AG04450 (cell line): ENCODE measurements at regions of chr12 and their contacts with region 1.

Region 1: DNA sequence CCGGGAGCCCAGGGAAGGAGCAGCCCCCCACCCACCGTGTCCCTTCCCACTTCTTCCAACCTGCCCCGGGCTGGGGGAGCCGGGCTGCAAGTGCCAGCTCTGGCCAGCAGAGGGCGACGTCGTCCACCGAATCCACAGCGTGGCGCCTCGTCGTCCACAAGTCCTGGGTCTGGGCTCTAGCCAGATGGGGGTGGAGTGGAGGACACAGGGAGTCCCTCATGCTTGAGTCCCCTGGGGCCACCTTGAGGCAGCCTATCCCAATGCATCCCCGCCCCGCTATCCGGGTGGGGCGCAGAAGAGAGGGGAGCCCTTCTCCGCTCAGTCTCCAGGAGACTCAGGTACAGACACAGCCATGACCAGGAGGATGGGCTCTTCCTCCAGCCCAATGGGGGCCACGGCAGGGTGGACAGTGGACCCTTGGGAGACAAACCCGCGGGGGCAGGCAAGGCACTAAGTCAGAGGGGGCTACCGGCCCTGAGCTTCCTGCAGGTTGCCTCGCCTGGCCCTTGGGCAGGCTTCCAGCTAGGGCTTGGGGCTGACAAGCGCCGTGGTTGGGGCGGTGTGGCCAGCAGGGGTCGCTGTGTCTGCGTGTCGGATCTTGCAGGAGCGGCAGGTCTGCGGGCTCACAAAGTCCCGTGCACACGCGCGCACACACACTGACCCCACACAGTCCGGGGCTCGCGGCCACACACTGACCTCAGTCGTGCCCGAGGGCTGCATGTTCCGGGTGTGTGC is 5.5 kb downstream of the AQP5 start:
- DNase-seq: peak; percentile 48
- H3K4me3 ChIP-seq: peak overlapping the region; percentile 54
- H3K27ac ChIP-seq: no peak overlapping the region
- H3K27me3 ChIP-seq: peaks cover 76% of the 10 kb centered on the region
- CTCF ChIP-seq: peak; percentile 81

Region 2: DNA sequence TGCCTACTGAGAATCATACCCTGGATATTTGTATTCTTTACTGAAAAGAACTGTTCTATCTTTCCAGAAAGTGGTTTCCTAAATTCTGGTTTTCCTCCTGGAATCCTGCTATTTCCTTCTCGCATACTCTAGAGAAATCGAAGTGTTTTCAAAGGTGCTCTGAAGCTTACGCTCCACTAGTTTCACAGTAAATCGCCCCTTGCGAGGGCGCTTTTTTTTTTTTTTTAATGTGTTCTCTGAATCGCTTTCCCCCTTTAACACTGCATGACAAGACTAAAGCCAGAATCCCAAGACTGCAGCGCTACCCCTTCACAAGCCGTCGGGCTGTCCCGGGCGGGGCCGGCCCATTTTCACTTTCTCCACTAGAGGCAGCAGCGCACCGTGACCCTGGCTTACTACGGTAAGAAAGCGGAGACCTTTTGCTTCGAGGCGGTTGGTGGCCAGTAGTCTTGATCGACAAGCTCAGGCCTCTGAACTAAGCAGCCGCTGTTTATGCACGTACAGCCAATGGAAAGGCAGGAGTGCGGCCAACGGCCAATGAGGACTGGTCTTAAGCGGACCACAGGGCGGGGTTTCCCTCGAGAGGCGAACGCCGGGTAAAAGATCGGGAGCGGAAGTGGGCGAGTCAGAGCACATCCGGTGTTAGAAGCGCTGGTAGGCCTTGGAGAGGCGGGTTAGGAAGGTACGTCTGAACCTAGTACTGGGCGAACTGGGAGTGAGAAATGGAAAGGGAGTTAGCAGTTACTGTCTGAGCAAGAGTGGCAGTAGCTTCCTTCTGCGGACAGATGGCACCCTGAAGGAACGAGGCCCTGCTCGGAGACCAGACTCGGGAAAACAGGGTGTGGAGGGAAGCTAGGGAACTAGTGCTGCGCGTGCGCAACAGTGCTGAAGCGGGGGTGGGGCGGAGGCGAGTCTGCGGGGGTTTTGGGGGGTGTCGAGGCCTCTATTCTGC is 226.0 kb before region 1 on chr12 and contains the start of gene TMBIM6:
- CTCF ChIA-PET with region 1: no interaction called
- POLR2A ChIA-PET with region 1: interaction called, 10 read pairs
- DNase-seq: peak; percentile 100
- H3K4me3 ChIP-seq: peak within 1 kb of the TSS; percentile 100
- H3K27ac ChIP-seq: peak within 1 kb of the TSS; percentile 97
- H3K27me3 ChIP-seq: no peaks in the 10 kb centered on the region
- CTCF ChIP-seq: peak; percentile 96
- polyA plus RNA-seq, gene TMBIM6: 711 and 906 TPM in 2 replicates

Region 3: DNA sequence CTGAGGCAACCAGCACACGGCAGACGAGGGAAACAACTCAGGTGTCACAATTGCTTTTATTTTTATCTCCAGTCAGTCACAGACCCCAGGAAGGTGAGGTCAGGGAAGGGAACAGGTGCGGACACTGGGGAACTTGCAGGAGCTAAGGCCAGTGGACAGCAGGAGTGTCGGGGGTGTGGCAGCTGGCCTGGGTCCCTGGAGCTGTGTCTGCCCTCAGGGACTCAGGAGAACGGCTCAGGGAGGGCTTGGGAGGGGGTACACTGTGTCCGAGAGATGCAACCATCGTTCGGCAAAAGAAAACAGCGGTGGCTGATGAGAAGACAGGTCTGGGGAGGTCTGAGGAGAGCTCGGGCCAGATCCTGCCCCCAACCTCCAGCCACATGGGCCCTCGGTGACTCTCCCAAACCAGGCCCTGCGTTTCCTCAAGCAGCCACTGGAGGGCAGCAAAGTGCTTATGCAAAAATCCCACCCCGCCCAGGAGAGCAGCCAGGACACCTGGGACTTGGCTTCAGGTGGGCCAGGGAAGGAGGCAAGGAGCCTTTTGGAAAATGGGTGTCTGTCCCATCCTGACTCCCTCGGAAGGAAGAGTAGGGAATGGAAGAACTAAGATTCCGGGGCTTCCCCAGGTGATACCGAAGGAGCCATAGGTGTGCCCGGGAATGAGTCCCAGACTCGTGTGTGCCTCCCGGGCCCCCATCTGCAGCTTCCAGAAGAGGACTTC is 100.2 kb before region 1 on chr12:
- CTCF ChIA-PET with region 1: interaction called, 20 read pairs
- POLR2A ChIA-PET with region 1: interaction called, 5 read pairs
- DNase-seq: peak; percentile 15
- H3K4me3 ChIP-seq: no peak overlapping the region
- H3K27ac ChIP-seq: no peak overlapping the region
- H3K27me3 ChIP-seq: peaks cover 23% of the 10 kb centered on the region
- CTCF ChIP-seq: peak; percentile 98

Region 4: GRCh38 chr12:49920241-49920921 is 46.8 kb before region 1 on chr12:
- CTCF ChIA-PET with region 1: no interaction called
- POLR2A ChIA-PET with region 1: no interaction called
- DNase-seq: no peak
- H3K4me3 ChIP-seq: no peak overlapping the region
- H3K27ac ChIP-seq: no peak overlapping the region
- H3K27me3 ChIP-seq: peaks cover 3% of the 10 kb centered on the region
- CTCF ChIP-seq: no peak

Region 5: GRCh38 chr12:49983892-49984291 is 16.7 kb after region 1 on chr12:
- CTCF ChIA-PET with region 1: interaction called, 102 read pairs
- POLR2A ChIA-PET with region 1: no interaction called
- DNase-seq: peak; percentile 67
- H3K4me3 ChIP-seq: no peak overlapping the region; the same call in 1 of the 2 replicates
- H3K27ac ChIP-seq: peak overlapping the region; percentile 47
- H3K27me3 ChIP-seq: no peaks in the 10 kb centered on the region
- CTCF ChIP-seq: 0 out of 2 replicates have a peak, but pooled peaks have one; percentile 6

Region 6: GRCh38 chr12:50016501-50017475 is 49.6 kb after region 1 on chr12:
- CTCF ChIA-PET with region 1: interaction called, 15 read pairs
- POLR2A ChIA-PET with region 1: no interaction called
- DNase-seq: peak; percentile 67
- H3K4me3 ChIP-seq: peak overlapping the region; percentile 36
- H3K27ac ChIP-seq: peak overlapping the region; percentile 41
- H3K27me3 ChIP-seq: no peaks in the 10 kb centered on the region
- CTCF ChIP-seq: no peak

Region 7: GRCh38 chr12:50055831-50056638 is 88.8 kb after region 1 on chr12:
- CTCF ChIA-PET with region 1: interaction called, 89 read pairs
- POLR2A ChIA-PET with region 1: no interaction called
- DNase-seq: no peak
- H3K4me3 ChIP-seq: no peak overlapping the region
- H3K27ac ChIP-seq: no peak overlapping the region
- H3K27me3 ChIP-seq: peaks cover 32% of the 10 kb centered on the region
- CTCF ChIP-seq: peak; percentile 99

Region 8: DNA sequence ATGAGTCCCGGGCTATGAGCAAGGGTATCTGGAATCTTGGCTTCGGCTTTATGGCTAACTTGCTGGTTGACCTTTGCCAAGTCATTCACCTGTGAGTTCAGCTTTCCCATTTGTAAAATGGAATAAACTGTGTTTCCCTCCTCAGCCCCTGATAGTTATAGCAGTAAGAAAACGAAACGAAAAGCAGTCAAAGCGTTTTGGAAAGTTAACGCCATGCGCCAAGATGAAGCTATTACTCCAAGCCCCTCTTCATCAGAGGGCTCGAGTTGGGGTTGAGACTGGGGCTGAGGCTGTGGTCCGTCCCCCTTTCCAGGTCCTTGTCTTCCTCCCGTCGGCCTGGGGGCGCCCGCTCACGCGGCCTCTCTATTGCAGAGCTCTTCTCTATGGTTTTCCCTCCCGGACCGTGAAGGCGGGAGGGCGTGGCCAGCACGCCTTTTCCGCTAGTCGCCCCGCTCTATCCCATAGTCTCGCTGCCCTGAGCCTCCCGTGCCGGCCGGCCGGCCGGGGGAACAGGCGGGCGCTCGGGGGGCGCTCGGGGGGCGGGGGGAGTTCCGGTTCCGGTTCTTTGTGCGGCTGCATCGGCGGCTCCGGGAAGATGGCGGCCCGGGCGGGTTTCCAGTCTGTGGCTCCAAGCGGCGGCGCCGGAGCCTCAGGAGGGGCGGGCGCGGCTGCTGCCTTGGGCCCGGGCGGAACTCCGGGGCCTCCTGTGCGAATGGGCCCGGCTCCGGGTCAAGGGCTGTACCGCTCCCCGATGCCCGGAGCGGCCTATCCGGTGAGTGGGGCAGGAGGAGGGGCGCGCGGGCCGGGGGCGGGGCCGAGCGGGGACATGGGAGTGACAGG is 117.8 kb after region 1 on chr12 and contains the start of gene SMARCD1:
- CTCF ChIA-PET with region 1: interaction called, 11 read pairs
- POLR2A ChIA-PET with region 1: no interaction called
- DNase-seq: peak; percentile 81
- H3K4me3 ChIP-seq: peak within 1 kb of the TSS; percentile 82
- H3K27ac ChIP-seq: peak within 1 kb of the TSS; percentile 87
- H3K27me3 ChIP-seq: no peaks in the 10 kb centered on the region
- CTCF ChIP-seq: peak; percentile 53
- polyA plus RNA-seq, gene SMARCD1: 57.2 and 65.1 TPM in 2 replicates